Left ventricle myocardium superior (tissue), 1 donor: ENCODE measurements at regions of chr3 and their contacts with region 1.

Region 1: DNA sequence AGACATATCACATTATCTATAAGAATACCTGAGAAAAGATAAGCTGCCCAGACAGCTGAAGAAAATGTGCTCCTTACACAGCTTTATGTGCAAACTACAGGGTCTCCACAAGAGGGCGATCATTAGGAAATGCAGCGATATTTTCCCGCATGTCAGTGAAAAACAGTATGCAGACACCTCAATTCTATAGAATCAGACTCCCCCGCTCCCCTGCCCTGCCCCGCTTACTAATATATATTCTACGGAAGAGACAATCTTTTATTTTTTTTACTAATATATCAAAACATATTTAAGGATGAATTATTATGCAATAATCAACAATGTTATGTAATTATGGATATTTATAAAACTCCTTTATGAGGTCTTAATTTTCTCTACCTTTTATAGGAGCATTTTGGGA is 681.3 kb downstream of the ROBO1 start:
- DNase-seq: no peak
- ATAC-seq: no peak

Region 2: GRCh38 chr3:78846718-78847117 is 239.8 kb before region 1 on chr3:
- intact Hi-C with region 1: no loop called
- DNase-seq: no peak
- ATAC-seq: peak; percentile 70

Region 3: DNA sequence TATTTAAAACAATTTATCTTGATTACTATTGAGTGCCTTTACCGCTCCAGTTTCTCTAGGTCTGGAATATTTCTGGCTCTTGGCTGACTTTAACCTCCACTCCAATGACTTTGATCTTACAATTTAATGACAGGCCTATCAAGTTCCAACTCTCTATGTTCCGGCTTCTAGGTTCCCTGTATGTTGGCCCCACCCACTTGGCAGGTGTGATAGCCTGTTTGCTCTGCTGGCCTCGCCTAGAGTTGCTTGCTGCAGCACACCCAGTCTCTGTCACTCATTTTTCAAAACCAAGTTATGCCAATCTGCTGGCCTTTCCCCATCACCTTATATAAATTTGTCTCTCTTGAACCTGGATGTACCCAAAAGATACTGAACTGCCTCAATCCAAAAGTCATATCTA is 253.3 kb after region 1 on chr3:
- intact Hi-C with region 1: no loop called
- DNase-seq: peak; percentile 27
- ATAC-seq: peak; percentile 83

Region 4: GRCh38 chr3:79361748-79362378 is 275.3 kb after region 1 on chr3:
- intact Hi-C with region 1: loop called (anchors 5 kb)
- DNase-seq: no peak
- ATAC-seq: no peak